ENCODE measurements at regions of chrX and their contacts with region 1.

Region 1: GRCh38 chrX:119852382-119853353 is at the start of gene UPF3B:
- DNase-seq: peak; percentile 97
- ATAC-seq: peak; percentile 98
- H3K4me3 Mint-ChIP-seq: peak within 1 kb of the TSS; percentile 96
- H3K27ac Mint-ChIP-seq: peak within 1 kb of the TSS; percentile 95
- H3K4me1 Mint-ChIP-seq: peaks cover 12% of the 10 kb centered on the region
- H3K27me3 Mint-ChIP-seq: no peaks in the 10 kb centered on the region
- CTCF ChIP-seq: no peak
- total RNA-seq, gene UPF3B: 16.0 to 16.6 TPM

Region 2: DNA sequence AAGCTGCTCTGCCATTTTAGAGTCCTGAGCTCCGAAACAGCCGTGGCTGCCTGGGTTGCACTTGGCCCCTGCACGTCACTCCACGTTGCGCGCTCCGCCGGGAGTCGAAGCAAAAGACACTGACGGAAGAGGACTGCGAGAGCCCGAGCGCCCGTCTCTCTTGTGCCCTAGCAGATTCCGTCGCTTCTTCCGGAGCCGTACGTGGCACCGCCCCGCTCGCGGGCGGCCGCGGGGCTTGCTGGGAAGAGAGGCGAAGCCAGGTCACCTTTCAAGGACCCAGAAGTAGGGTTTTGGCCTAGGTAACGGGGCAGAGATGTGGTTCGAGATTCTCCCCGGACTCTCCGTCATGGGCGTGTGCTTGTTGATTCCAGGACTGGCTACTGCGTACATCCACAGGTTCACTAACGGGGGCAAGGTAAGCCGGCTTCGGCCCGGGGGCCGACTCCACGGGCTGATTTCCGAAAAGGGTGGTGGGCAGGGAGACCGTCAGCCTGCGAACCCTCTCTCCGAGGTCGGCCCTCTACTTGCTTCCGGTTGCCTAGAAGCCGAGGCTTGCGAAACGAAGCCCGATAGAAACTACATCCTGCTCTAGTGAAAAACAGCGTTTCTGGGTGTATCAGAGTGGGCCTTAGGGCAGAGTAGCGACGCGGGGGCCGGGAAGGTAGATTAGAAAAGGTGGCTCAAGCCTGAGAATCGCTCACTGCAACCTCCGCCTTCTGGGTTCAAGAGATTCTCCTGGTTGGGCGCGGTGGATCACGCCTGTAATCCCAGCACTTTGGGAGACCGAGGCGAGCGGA is 19.1 kb after region 1 on chrX and contains the starts of genes NDUFA1 and RNF113A:
- CTCF ChIA-PET with region 1: interaction called, 5 read pairs
- POLR2A ChIA-PET with region 1: interaction called, 14 read pairs
- intact Hi-C with region 1: no loop called
- DNase-seq: peak; percentile 87
- ATAC-seq: peak; percentile 94
- H3K4me3 Mint-ChIP-seq: peak within 1 kb of the TSS; percentile 95
- H3K27ac Mint-ChIP-seq: peak within 1 kb of the TSS; percentile 98
- H3K4me1 Mint-ChIP-seq: peaks cover 11% of the 10 kb centered on the region
- H3K27me3 Mint-ChIP-seq: no peaks in the 10 kb centered on the region
- CTCF ChIP-seq: no peak
- total RNA-seq, gene NDUFA1: 85.5 to 90.6 TPM
- total RNA-seq, gene RNF113A: 32.3 to 33.2 TPM

Region 3: GRCh38 chrX:119960625-119961024 is 108.0 kb after region 1 on chrX:
- CTCF ChIA-PET with region 1: no interaction called
- POLR2A ChIA-PET with region 1: no interaction called
- intact Hi-C with region 1: no loop called
- DNase-seq: no peak
- ATAC-seq: no peak
- H3K4me3 Mint-ChIP-seq: no peak overlapping the region
- H3K27ac Mint-ChIP-seq: no peak overlapping the region
- H3K4me1 Mint-ChIP-seq: peaks cover 11% of the 10 kb centered on the region
- H3K27me3 Mint-ChIP-seq: peaks cover 10% of the 10 kb centered on the region
- CTCF ChIP-seq: no peak

Measured in activated CD8-positive, alpha-beta T cell treated with anti-CD3 and anti-CD28 coated beads for 36 hours (primary cell).